ENCODE measurements at regions of chr3 and their contacts with region 1.

Region 1: GRCh38 chr3:29280404-29281093 is at the start of gene RBMS3:
- DNase-seq: peak; percentile 83
- H3K4me3 ChIP-seq: peak within 1 kb of the TSS; percentile 36 to 42
- H3K27ac ChIP-seq: peak within 1 kb of the TSS; percentile 78 to 79
- H3K4me1 ChIP-seq: no peaks in the 10 kb centered on the region
- H3K27me3 ChIP-seq: no peaks in the 10 kb centered on the region
- CTCF ChIP-seq: peak in 2 of 4 experiments; percentile 43 to 55
- POLR2A ChIP-seq: no peak
- total RNA-seq, gene RBMS3: 31.7 to 45.1 TPM

Region 2: DNA sequence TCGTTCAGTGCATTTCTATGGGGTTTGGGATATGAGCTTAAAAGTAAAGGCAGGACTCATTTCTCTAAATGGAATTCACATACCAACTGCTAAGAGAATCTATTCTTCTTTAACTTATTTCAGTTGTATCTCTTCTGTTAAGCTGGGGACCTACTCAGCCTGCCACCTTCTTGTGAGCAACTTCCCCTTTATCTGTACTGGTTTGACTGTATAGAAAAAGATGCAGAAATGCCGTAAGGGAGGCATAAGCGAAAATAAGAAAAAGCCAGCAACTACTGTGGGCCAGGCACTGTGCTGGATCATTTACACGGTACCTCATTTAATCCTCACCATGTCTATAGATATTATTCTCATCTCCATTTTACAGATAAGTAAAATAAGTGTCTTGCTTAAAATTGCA is 38.7 kb after region 1 on chr3:
- intact Hi-C with region 1: loop called (anchors 5 kb)
- DNase-seq: no peak
- H3K4me3 ChIP-seq: no peak overlapping the region
- H3K27ac ChIP-seq: peak overlapping the region; percentile 14 to 50
- H3K4me1 ChIP-seq: no peaks in the 10 kb centered on the region
- H3K27me3 ChIP-seq: no peaks in the 10 kb centered on the region
- CTCF ChIP-seq: no peak
- POLR2A ChIP-seq: no peak

Region 3: DNA sequence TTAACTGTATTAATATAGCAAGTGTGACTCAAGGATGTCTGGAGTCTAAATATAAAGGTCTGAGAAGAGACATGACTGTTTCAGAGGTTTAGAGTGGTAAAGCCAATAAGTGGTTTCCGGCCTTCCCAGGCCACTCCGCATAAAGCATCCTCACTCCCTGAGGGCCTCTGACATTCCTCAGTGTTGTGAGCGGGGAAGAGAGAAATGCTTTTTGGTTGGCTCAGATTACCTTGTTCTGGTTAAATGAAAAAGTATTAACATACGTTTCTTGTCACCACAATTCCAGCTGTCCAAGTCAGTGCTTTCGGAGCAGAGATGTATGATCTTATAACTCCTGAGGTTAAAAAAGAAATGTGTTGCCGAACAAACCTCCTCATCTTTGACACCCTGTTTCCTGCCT is 104.1 kb after region 1 on chr3:
- intact Hi-C with region 1: loop called (anchors 10 kb)
- DNase-seq: no peak
- H3K4me3 ChIP-seq: no peak overlapping the region
- H3K27ac ChIP-seq: peak overlapping the region in 1 of 2 donors; percentile 8
- H3K4me1 ChIP-seq: no peaks in the 10 kb centered on the region
- H3K27me3 ChIP-seq: no peaks in the 10 kb centered on the region
- CTCF ChIP-seq: no peak
- POLR2A ChIP-seq: no peak

Region 4: GRCh38 chr3:29642393-29643033 is 362.0 kb after region 1 on chr3:
- intact Hi-C with region 1: loop called (anchors 5 kb)
- DNase-seq: peak; percentile 71
- H3K4me3 ChIP-seq: no peak overlapping the region
- H3K27ac ChIP-seq: peak overlapping the region; percentile 43 to 50
- H3K4me1 ChIP-seq: peaks cover 2% of the 10 kb centered on the region
- H3K27me3 ChIP-seq: no peaks in the 10 kb centered on the region
- CTCF ChIP-seq: peak in 1 of 4 experiments; percentile 10
- POLR2A ChIP-seq: no peak

Measured in prostate gland (tissue), 2 donors.